ENCODE measurements at regions of chr20 and their contacts with region 1.

Region 1: DNA sequence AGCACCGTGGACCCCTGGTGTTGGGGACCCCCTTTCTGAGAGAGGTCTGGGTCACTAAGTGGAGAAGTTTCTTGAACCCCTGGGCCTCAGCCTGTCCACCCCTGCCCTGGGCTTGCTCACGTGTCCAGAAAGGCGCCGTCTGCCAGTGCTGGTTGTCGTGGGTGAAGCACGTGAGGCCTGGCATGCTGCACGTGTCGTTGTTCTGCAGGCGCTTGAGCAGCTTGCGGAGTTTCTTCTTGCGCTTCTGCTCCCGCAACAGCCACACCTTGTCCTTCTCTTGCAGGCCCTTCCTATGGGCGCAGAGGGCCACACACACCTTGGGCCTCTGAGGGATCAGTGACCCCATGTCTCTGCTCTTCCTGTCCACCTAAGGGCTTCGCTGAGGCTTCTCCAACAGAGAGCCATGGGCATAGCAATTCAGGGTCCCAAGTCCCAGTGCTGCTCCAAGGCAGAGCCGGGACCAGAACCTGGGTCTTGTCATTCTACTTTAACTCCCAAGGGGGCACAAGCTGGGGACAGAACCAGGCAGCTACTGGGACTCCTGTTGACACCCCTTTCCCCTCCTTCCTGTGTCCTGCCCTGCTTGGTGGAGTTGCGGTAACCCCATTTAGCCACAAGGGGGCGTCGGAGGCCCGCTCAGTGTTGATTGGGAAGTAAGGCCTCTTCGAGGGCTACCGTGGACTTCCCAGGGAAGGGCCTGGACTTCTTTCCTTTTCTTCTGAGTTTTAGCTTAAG is 121.8 kb downstream of the SULF2 start:
- DNase-seq: peak; percentile 67
- H3K4me3 ChIP-seq: no peak overlapping the region
- H3K27ac ChIP-seq: no peak overlapping the region
- H3K4me1 ChIP-seq: peaks cover 24% of the 10 kb centered on the region
- H3K27me3 ChIP-seq: no peaks in the 10 kb centered on the region
- CTCF ChIP-seq: peak; percentile 92 to 95

Region 2: GRCh38 chr20:46979603-46980241 is 683.8 kb before region 1 on chr20:
- CTCF ChIA-PET with region 1: no interaction called
- dilution Hi-C with region 1: no loop called
- in situ Hi-C with region 1: no loop called
- intact Hi-C with region 1: no loop called
- DNase-seq: no peak
- H3K4me3 ChIP-seq: no peak overlapping the region
- H3K27ac ChIP-seq: no peak overlapping the region
- H3K4me1 ChIP-seq: peaks cover 5% of the 10 kb centered on the region
- H3K27me3 ChIP-seq: peaks cover 2% of the 10 kb centered on the region
- CTCF ChIP-seq: no peak

Region 3: DNA sequence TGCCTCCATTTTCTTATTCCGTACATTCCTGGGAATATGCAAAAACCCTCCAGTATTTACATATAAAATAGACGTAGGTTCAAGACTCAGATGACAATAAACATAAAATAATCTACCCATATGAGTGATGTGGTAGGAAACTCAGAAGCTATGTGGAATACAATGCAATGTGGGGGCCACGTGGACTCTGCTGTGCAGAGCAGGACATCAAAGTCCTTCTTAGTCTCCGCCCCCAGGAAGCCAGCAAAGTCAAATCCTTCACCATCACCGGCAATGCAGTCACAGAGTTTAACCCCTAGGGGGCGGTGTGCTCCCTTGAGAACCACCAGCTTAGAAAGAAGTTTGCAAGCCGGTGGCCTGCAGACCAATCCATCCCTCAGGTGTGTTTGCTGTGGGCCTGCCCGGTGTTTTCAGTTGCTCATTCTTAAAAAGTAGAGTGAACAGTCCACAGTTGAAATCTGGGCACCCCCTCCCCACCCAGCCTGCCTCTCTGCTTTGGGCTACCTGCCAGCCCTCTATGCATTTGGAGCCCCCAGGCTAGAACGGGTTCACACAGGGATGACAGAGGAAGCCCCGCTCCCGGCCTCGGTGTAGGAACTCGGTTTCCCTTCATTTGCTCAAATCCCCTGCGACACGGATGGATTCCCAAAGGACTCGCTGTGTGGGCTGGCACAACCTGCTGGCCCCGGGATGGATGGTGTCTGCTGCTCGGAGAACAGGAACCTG is 61.9 kb after region 1 on chr20:
- CTCF ChIA-PET with region 1: no interaction called
- dilution Hi-C with region 1: no loop called
- in situ Hi-C with region 1: no loop called
- intact Hi-C with region 1: loop called (anchors 2 kb)
- DNase-seq: peak; percentile 76
- H3K4me3 ChIP-seq: no peak overlapping the region
- H3K27ac ChIP-seq: no peak overlapping the region
- H3K4me1 ChIP-seq: no peaks in the 10 kb centered on the region
- H3K27me3 ChIP-seq: no peaks in the 10 kb centered on the region
- CTCF ChIP-seq: peak; percentile 92 to 95

Region 4: GRCh38 chr20:48921151-48921898 is 1257.8 kb after region 1 on chr20 and contains the start of gene ARFGEF2:
- CTCF ChIA-PET with region 1: no interaction called
- dilution Hi-C with region 1: no loop called
- in situ Hi-C with region 1: no loop called
- intact Hi-C with region 1: loop called (anchors 10 kb)
- DNase-seq: peak; percentile 85
- H3K4me3 ChIP-seq: peak within 1 kb of the TSS; percentile 67 to 79 (median 69)
- H3K27ac ChIP-seq: peak within 1 kb of the TSS; percentile 88
- H3K4me1 ChIP-seq: peaks cover 15% of the 10 kb centered on the region
- H3K27me3 ChIP-seq: no peaks in the 10 kb centered on the region
- CTCF ChIP-seq: no peak
- total RNA-seq, gene ARFGEF2: 27.7 to 36.0 TPM

Measured in mammary epithelial cell (primary cell).